Spleen (tissue), 13 donors: ENCODE measurements at regions of chr13 and their contacts with region 1.

Region 1: DNA sequence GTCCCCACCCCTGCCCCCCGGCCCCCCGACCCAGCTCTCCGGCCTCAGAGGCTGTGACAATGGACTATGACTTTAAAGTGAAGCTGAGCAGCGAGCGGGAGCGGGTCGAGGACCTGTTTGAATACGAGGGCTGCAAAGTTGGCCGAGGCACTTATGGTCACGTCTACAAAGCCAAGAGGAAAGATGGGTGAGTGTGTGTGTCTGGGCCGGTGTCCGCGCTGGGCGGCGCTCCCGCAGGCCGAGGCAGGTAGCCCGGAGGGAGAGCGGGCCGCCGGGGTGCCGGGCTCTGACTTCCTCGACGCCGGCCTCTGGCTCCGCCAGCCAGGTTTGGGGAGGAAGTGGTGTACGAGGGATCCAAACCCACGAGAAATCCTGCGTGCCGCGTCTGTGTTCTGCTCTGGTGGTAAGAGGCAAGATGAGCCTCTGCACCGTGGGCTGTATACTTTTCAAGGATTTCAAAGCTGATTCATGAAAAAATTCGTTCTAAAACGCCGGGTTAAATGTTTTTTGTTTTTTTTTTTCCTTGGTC is 718 bp downstream of the CDK8 start:
- DNase-seq: peak; percentile 93
- H3K4me3 ChIP-seq: peak overlapping the region; percentile 82 to 98 (median 94)
- H3K27ac ChIP-seq: peak overlapping the region; percentile 89 to 98 (median 95)
- H3K4me1 ChIP-seq: peaks cover 15 to 40% (median 28%) of the 10 kb centered on the region in 6 donors
- H3K27me3 ChIP-seq: peaks cover 0 to 6% (median 0%) of the 10 kb centered on the region in 7 donors
- CTCF ChIP-seq: no peak
- POLR2A ChIP-seq: no peak

Region 2: GRCh38 chr13:26221721-26222519 is 32.7 kb before region 1 on chr13 and contains the start of gene RNF6:
- intact Hi-C with region 1: loop called (anchors 5 kb)
- DNase-seq: peak; percentile 96
- H3K4me3 ChIP-seq: peak within 1 kb of the TSS; percentile 85 to 98 (median 90)
- H3K27ac ChIP-seq: peak within 1 kb of the TSS; percentile 93 to 98 (median 96)
- H3K4me1 ChIP-seq: peaks cover 10 to 45% (median 33%) of the 10 kb centered on the region in 6 donors
- H3K27me3 ChIP-seq: no peaks in the 10 kb centered on the region
- CTCF ChIP-seq: peak in 5 of 11 experiments; percentile 8 to 32 (median 16)
- POLR2A ChIP-seq: peak in 2 of 3 donors; percentile 42 to 55
- total RNA-seq, gene RNF6: 29.1 to 39.0 (median 30.5) TPM